K562 (cell line): ENCODE measurements at regions of chr20 and their contacts with region 1.

Region 1: DNA sequence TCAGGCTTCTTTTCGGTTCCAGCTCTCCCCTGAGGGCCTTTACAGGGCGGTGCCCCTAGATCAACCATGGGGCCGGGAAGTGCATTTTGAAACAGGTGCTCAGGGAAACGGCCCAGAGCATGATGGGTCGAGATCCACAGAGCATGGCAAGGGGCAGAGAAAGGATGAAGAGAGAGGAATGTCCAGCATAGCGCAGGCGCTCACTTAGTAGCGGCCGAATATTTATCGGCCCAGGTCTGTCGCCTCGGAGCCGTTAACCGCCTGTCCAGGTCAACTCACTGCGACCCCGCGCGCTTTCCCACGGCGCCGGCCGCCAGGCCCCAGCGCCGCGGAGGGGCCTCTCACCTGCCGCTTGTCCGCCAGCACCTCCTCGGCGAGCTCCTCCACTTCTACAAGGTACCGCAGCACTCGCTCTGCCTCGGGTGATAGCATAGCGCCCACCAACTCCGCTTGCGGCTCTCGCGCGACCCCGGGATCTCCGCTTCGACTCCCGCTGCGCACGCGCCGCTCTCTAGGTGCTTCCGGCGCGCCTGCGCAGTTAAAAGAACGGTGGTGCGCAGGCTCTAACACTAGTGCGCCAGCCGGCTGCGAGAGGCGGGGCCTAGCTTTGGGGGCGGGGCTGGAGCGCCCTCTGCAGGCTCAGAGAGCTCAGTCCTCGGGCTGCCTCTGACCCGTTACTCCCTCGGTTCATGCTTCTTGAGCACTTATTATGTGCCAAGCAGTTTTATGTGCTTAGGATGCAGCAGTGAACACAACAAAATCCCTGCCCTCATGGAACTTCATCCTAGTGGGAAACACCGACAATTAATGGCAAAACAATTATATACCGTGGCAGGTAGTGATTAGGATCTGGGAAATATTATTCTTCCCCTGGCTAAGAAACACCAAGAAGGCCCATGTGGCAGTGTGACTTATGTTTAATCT is at the start of gene PDRG1:
- DNase-seq: peak; percentile 94 to 98 (median 97)
- ATAC-seq: peak; percentile 92
- H3K4me3 ChIP-seq: peak within 1 kb of the TSS; percentile 63
- H3K27ac ChIP-seq: peak within 1 kb of the TSS; percentile 68
- H3K4me1 ChIP-seq: peaks cover 16 to 17% of the 10 kb centered on the region in 2 experiments
- H3K27me3 ChIP-seq: no peaks in the 10 kb centered on the region; a peak in 1 of 5 replicates
- CTCF ChIP-seq: peak; percentile 91 to 97 (median 95)
- EP300 ChIP-seq: no peak
- POLR2A ChIP-seq: peak; percentile 85
- RAD21 ChIP-seq: peak; percentile 96
- polyA plus RNA-seq, gene PDRG1: 38.5 to 58.6 TPM

Region 2: GRCh38 chr20:31861346-31862156 is 90.2 kb before region 1 on chr20:
- CTCF ChIA-PET with region 1: no interaction called
- POLR2A ChIA-PET with region 1: no interaction called
- in situ Hi-C with region 1: loop called (anchors 5 kb)
- intact Hi-C with region 1: no loop called
- DNase-seq: peak; percentile 78 to 99 (median 98)
- ATAC-seq: peak; percentile 98
- H3K4me3 ChIP-seq: peak overlapping the region; percentile 40
- H3K27ac ChIP-seq: no peak overlapping the region
- H3K4me1 ChIP-seq: peaks cover 0 to 17% of the 10 kb centered on the region in 2 experiments; a peak in 3 of 5 replicates
- H3K27me3 ChIP-seq: peaks cover 23 to 67% of the 10 kb centered on the region in 2 experiments
- CTCF ChIP-seq: no peak
- EP300 ChIP-seq: no peak
- POLR2A ChIP-seq: no peak
- RAD21 ChIP-seq: no peak

Region 3: DNA sequence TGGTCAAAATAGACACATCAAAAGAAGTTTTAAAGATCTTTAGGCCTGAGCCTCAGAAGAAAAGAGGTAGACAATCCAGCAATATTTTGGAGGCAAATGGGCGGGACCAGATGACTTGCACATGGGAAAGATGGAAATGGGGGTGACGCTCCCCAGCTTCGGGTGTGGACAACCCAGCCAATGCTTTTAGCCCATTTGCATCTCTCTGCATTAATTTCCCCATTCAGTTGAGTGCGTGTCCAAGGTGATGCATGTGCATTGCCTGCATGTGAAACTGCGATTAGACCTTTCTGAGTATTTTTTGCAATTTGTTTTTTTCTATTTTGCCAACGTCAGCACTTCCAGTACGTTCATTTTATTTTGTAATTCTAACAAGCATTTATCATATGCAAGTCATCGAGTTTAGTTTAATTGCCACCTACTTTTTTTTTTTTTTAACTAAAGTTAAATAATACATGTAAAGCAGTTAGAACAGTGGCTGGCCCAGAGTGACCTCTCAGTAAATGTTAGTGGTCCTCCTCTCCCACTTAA is 24.1 kb before region 1 on chr20:
- CTCF ChIA-PET with region 1: no interaction called
- POLR2A ChIA-PET with region 1: interaction called, 4 read pairs
- in situ Hi-C with region 1: no loop called
- intact Hi-C with region 1: loop called (anchors 2 kb)
- DNase-seq: no peak
- ATAC-seq: no peak
- H3K4me3 ChIP-seq: no peak overlapping the region
- H3K27ac ChIP-seq: no peak overlapping the region
- H3K4me1 ChIP-seq: 0 out of 5 replicates have a peak, but pooled peaks cover 0 to 4% of the 10 kb centered on the region in 2 experiments
- H3K27me3 ChIP-seq: peaks cover 8 to 29% of the 10 kb centered on the region in 2 experiments; a peak in 3 of 5 replicates
- CTCF ChIP-seq: no peak
- EP300 ChIP-seq: no peak
- POLR2A ChIP-seq: no peak
- RAD21 ChIP-seq: no peak

Region 4: DNA sequence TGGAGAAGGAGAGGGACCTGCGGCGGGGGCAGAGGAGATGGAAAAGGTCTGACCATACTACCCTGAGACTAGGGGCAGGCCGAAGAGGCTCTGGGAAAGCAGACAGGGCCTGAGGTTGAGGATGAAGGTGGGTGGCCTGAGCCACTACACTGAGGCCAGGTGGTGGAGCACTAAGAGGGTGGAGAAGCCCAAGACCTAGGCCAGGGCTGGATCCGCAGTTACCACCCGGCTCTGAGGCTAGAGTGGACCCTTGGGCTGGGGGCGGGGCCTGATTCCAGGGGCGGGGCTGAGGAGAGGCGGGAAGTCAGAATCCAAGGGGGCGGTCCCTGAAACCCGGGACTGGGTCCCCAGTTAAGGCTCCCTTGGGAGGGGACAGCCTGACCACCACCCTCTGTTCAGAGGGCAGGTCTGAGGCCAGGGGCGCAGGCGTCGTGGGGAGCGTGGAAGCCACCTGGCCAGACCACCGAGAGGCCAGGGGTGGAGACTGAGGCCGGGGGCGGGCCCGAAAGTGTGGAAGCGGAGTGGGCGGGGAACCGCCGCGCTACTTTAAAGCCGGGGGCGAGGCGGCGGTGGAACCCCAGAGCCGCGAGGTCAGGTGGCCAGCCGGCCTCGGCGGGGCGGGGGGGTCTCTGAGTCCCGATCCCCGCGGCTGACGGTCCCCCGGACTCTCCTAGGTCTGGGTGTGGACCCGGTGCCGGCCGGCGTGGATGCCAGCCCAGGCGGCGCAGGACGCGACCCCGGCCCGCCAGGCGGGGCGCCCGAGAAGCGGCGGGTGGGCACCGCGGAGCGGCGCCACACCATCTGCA is 66.7 kb after region 1 on chr20:
- CTCF ChIA-PET with region 1: no interaction called
- POLR2A ChIA-PET with region 1: no interaction called
- in situ Hi-C with region 1: no loop called
- intact Hi-C with region 1: loop called (anchors 5 kb)
- DNase-seq: peak; percentile 71 to 88 (median 88)
- ATAC-seq: peak; percentile 97
- H3K4me3 ChIP-seq: peak overlapping the region; percentile 50
- H3K27ac ChIP-seq: no peak overlapping the region
- H3K4me1 ChIP-seq: peaks cover 6 to 19% of the 10 kb centered on the region in 2 experiments; a peak in 4 of 5 replicates
- H3K27me3 ChIP-seq: peaks cover 27 to 62% of the 10 kb centered on the region in 2 experiments
- CTCF ChIP-seq: peak in 2 of 3 experiments; percentile 10 to 49; a peak in 3 of 6 replicates
- EP300 ChIP-seq: no peak
- POLR2A ChIP-seq: no peak
- RAD21 ChIP-seq: no peak

Region 5: DNA sequence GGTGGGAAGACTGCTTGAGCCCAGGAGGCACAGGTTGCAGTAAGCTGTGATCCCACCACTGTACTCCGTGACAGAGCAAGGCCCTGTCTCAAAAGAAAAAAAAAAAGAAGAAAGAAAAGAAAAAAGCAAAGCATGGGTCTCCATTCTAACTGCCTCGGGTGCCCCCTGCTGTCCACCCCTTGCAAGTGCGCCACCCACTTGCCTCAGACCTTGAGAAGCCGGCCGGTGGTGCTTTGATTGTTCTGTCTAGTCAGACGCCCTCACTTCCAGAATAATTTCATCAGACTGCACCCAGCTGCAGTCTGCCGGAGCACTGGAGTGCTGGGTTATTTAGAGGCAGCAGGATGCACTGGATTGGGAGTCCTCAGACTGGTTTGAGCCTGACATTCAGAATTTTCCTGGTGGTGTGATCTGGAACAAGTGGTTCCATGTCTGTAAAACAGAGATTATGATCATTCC is 140.1 kb after region 1 on chr20:
- CTCF ChIA-PET with region 1: no interaction called
- POLR2A ChIA-PET with region 1: no interaction called
- in situ Hi-C with region 1: no loop called
- intact Hi-C with region 1: loop called (anchors 5 kb)
- DNase-seq: peak; percentile 78 to 81 (median 79)
- ATAC-seq: peak; percentile 97
- H3K4me3 ChIP-seq: no peak overlapping the region
- H3K27ac ChIP-seq: no peak overlapping the region
- H3K4me1 ChIP-seq: no peaks in the 10 kb centered on the region; a peak in 2 of 5 replicates
- H3K27me3 ChIP-seq: peaks cover 20 to 51% of the 10 kb centered on the region in 2 experiments
- CTCF ChIP-seq: peak; percentile 88 to 94 (median 88)
- EP300 ChIP-seq: no peak
- POLR2A ChIP-seq: no peak
- RAD21 ChIP-seq: peak; percentile 65 to 69

Region 6: GRCh38 chr20:33046412-33046811 is 1094.6 kb after region 1 on chr20:
- CTCF ChIA-PET with region 1: no interaction called
- POLR2A ChIA-PET with region 1: no interaction called
- in situ Hi-C with region 1: no loop called
- intact Hi-C with region 1: no loop called
- DNase-seq: no peak
- ATAC-seq: no peak
- H3K4me3 ChIP-seq: no peak overlapping the region
- H3K27ac ChIP-seq: no peak overlapping the region
- H3K4me1 ChIP-seq: no peaks in the 10 kb centered on the region
- H3K27me3 ChIP-seq: peaks cover 0 to 19% of the 10 kb centered on the region in 2 experiments; a peak in 2 of 5 replicates
- CTCF ChIP-seq: no peak
- EP300 ChIP-seq: no peak
- POLR2A ChIP-seq: no peak
- RAD21 ChIP-seq: no peak